Activated naive CD4-positive, alpha-beta T cell treated with anti-CD3 and anti-CD28 coated beads for 36 hours (primary cell): ENCODE measurements at regions of chr9 and their contacts with region 1.

Region 1: GRCh38 chr9:79757881-79758669 is 186.3 kb downstream of the TLE4 start:
- DNase-seq: no peak
- H3K4me3 Mint-ChIP-seq: no peak overlapping the region
- H3K27ac Mint-ChIP-seq: no peak overlapping the region
- H3K4me1 Mint-ChIP-seq: peaks cover 3% of the 10 kb centered on the region
- H3K27me3 Mint-ChIP-seq: no peaks in the 10 kb centered on the region

Region 2: GRCh38 chr9:79812507-79813257 is 54.6 kb after region 1 on chr9:
- CTCF ChIA-PET with region 1: no interaction called
- intact Hi-C with region 1: no loop called
- DNase-seq: peak; percentile 56
- H3K4me3 Mint-ChIP-seq: peak overlapping the region; percentile 47
- H3K27ac Mint-ChIP-seq: no peak overlapping the region
- H3K4me1 Mint-ChIP-seq: peaks cover 23% of the 10 kb centered on the region
- H3K27me3 Mint-ChIP-seq: no peaks in the 10 kb centered on the region

Region 3: DNA sequence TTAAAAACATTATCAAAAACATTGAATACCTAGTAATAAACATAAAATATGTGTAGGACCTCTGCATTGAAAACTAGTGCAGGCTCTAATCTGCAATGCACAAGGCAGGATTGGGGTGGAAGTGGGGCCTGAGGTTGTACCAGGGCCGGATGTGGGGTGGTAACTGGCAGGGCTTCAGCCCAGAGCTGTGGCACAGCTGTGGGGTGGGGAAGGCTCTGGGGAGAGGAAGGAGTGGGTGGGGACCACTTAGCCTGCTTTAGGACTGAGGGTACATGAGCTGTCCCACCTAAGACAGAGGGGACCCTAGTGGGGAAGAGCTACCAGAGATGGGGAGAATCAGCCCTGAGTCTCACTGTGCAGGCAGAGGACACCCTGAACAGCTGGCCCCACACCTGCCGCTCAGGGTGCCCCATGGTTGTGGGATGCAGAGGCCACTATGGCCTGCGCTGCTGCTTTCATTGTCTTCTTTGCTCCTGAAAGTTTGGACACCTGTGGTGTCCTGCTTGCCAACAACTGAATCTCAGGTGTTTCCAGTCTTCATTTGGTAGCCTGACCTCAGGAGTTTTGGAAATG is 125.1 kb after region 1 on chr9:
- CTCF ChIA-PET with region 1: no interaction called
- intact Hi-C with region 1: loop called (anchors 10 kb)
- DNase-seq: peak; percentile 53
- H3K4me3 Mint-ChIP-seq: no peak overlapping the region
- H3K27ac Mint-ChIP-seq: no peak overlapping the region
- H3K4me1 Mint-ChIP-seq: peaks cover 62% of the 10 kb centered on the region
- H3K27me3 Mint-ChIP-seq: no peaks in the 10 kb centered on the region